ENCODE measurements at regions of chr6 and their contacts with region 1.

Region 1: GRCh38 chr6:6547110-6547879 is 41.2 kb upstream of the LY86 start:
- DNase-seq: peak; percentile 80 to 94 (median 89)
- H3K4me3 ChIP-seq: peak overlapping the region; percentile 42 to 78 (median 60)
- H3K27ac ChIP-seq: peak overlapping the region in 46 of 59 donors; percentile 6 to 88 (median 76)
- H3K27me3 ChIP-seq: peaks cover 0 to 6% (median 0%) of the 10 kb centered on the region in 45 donors
- CTCF ChIP-seq: peak; percentile 94 to 99 (median 97)

Region 2: DNA sequence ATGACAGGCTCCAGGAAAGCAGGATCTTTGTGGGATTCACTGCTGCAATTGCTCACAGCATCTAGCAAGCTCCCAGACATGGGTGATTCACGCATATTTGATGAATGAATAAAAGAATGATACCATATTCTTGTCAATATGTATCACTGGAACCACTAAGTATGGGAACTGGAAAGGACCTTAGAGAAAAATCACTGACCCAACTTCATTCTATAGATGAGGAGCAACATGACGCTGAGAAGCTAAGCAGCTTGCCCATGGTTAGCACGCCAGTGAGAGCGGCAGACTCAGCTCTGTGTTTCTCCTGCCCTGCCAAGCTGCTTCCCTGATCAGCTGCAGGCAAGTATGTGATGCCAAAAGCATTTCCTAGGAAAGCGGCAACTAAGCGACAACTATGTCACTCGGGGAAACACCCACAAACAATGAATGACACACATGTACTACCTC is 1395.3 kb before region 1 on chr6:
- intact Hi-C with region 1: loop called in 1 of 2 experiments (anchors 10 kb)
- DNase-seq: peak in 7 of 10 donors; percentile 52 to 71 (median 64)
- H3K4me3 ChIP-seq: peak overlapping the region in 43 of 59 donors; percentile 0 to 46 (median 20)
- H3K27ac ChIP-seq: peak overlapping the region in 52 of 59 donors; percentile 6 to 77 (median 54)
- H3K27me3 ChIP-seq: no peaks in the 10 kb centered on the region
- CTCF ChIP-seq: peak in 2 of 56 donors; percentile 6 to 16

Region 3: DNA sequence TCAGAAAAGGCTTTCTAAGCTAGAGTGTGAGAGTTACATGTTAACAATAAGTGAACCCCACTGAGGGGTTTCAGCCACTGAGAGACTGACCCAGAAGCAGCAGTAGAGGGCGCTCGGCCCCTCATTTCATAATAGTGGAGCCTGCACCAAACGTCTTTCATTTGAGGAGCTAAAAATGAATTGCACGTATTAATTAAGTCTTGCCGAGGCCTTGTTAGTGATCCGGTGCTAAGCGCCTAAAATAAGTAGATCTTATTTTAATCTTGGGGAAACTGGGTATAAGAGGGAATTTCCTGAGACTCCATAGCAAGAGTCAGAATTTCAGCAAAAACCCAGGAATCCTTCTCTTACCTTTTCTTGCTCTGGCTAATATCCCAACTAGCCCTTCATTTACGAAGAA is 1076.3 kb before region 1 on chr6:
- intact Hi-C with region 1: loop called (anchors 10 kb)
- DNase-seq: peak in 9 of 10 donors; percentile 43 to 82 (median 73)
- H3K4me3 ChIP-seq: peak overlapping the region in 46 of 59 donors; percentile 1 to 59 (median 28)
- H3K27ac ChIP-seq: peak overlapping the region in 15 of 59 donors; percentile 6 to 56 (median 21)
- H3K27me3 ChIP-seq: no peaks in the 10 kb centered on the region
- CTCF ChIP-seq: peak; percentile 63 to 93 (median 84)

Region 4: DNA sequence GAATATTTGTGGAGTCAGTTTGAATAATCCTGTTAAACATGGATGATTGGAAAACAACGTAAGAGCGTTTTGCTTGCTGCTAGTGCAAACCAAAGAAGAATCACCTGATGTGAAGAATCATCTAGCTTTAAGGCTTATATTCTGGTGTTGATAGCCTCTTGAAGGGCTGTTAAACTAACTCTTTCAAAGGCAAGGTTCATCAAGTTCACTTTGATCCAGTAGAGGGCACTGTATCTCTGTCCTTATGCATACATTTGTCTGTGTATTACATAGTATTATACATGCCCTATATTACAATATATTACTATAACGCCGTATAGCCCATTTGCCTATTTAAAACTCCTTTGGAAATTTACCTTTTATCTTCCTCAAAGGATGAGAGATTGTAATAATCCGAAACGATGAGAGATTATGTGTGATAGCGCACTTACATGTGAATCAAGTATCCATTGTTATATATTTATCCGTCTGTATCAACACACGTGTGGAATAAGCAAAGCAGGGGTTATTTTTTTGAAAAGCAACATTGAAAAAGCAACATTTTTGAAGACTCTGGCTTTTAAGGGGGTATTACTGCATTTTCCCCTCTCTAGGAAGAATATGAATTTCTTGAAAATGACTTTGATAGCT is 489.8 kb before region 1 on chr6:
- intact Hi-C with region 1: loop called (anchors 2 to 5 kb)
- DNase-seq: no peak
- H3K4me3 ChIP-seq: no peak overlapping the region
- H3K27ac ChIP-seq: no peak overlapping the region
- H3K27me3 ChIP-seq: peaks cover 0 to 5% (median 0%) of the 10 kb centered on the region in 45 donors
- CTCF ChIP-seq: peak in 55 of 56 donors; percentile 48 to 82 (median 65)

Region 5: DNA sequence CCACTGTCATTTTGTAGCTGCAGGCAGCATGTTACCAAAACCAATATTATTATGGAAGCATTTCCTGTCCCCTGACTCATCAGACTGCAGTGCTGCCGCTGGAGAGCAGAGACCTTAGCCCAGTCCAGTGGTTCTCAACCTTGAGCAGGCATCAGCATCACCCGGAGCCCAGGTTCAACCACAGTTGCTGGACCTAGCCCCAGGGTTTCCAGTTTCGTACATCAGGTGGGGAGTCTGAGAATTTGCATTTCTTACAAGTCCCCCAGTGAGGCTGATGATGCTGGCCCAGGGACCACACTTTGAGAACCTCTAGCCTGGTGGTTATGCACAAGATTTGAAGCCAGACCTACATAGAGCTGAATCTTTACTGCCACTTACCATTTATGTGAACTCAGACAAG is 88.6 kb after region 1 on chr6:
- intact Hi-C with region 1: no loop called
- DNase-seq: no peak
- H3K4me3 ChIP-seq: no peak overlapping the region
- H3K27ac ChIP-seq: no peak overlapping the region
- H3K27me3 ChIP-seq: no peaks in the 10 kb centered on the region
- CTCF ChIP-seq: no peak

Measured in dorsolateral prefrontal cortex (tissue), 120 donors.